ENCODE measurements at regions of chr20 and their contacts with region 1.

Region 1: DNA sequence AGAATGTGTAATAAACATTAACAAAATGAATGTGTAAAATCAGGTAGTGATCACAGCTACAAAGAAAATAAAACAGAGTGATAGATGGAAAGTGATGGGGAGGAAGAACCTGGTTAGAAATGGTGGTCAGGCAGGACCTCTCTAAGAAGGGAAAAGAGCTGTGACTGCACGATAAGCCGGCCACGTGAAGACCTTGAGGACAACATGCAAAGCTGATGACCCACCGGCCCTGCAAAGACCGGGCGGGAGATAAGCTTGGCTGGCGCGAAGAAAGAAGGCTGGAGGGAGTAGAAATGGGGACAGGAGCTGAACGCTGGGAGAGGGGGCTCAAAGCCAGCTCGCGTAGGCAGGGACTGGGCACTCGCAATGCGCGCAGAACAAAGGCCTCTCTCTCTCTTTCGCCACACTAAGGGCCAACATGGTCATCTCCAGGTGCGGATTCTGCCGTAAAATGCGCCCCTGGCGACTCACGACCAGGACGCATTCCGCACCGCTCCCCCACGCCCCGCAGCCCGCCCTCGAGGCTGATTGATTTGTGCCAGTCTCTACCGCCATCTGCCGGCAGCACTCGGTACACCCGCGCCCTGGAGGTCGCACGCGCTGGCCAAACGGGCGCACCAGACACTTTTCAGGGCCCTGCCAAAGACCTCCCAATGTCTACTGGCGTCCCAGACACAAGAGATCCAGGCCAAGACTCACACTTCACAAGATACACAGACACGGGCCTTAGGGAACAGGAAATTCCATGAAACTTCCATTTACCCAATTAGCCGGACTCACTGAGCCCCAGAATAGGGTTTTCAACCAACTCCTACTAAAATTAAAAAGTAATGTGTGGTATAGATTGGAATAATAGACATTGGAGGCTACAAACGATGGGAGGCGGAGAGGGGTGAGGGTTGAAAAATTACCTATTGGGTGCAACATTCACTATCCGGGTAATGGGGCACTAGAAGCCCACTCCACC is 9.4 kb downstream of the DEFB132 start:
- DNase-seq: peak; percentile 82 to 87 (median 83)
- H3K4me3 ChIP-seq: peak overlapping the region in 1 of 2 donors; percentile 60
- H3K4me3 Mint-ChIP-seq: peak overlapping the region; percentile 80 to 87 (median 84)
- H3K27ac ChIP-seq: no peak overlapping the region
- H3K27ac Mint-ChIP-seq: peak overlapping the region in 4 of 7 donors; percentile 52 to 72 (median 64)
- H3K4me1 ChIP-seq: peaks cover 7% of the 10 kb centered on the region
- H3K4me1 Mint-ChIP-seq: peaks cover 7 to 11% (median 9%) of the 10 kb centered on the region in 4 donors
- H3K27me3 ChIP-seq: no peaks in the 10 kb centered on the region
- H3K27me3 Mint-ChIP-seq: peaks cover 3 to 21% of the 10 kb centered on the region in 2 donors

Region 2: GRCh38 chr20:208942-209566 is 57.8 kb before region 1 on chr20:
- CTCF ChIA-PET with region 1: interaction called, 17 read pairs
- POLR2A ChIA-PET with region 1: no interaction called
- intact Hi-C with region 1: loop called (anchors 1 kb)
- DNase-seq: peak in 4 of 5 donors; percentile 34 to 46 (median 38)
- H3K4me3 ChIP-seq: no peak overlapping the region
- H3K4me3 Mint-ChIP-seq: no peak overlapping the region
- H3K27ac ChIP-seq: no peak overlapping the region
- H3K27ac Mint-ChIP-seq: no peak overlapping the region
- H3K4me1 ChIP-seq: no peaks in the 10 kb centered on the region
- H3K4me1 Mint-ChIP-seq: no peaks in the 10 kb centered on the region
- H3K27me3 ChIP-seq: no peaks in the 10 kb centered on the region
- H3K27me3 Mint-ChIP-seq: peaks cover 0 to 4% of the 10 kb centered on the region in 2 donors

Region 3: GRCh38 chr20:219290-220115 is 47.4 kb before region 1 on chr20:
- CTCF ChIA-PET with region 1: interaction called, 10 read pairs
- POLR2A ChIA-PET with region 1: no interaction called
- intact Hi-C with region 1: no loop called
- DNase-seq: no peak
- H3K4me3 ChIP-seq: no peak overlapping the region
- H3K4me3 Mint-ChIP-seq: no peak overlapping the region
- H3K27ac ChIP-seq: no peak overlapping the region
- H3K27ac Mint-ChIP-seq: no peak overlapping the region
- H3K4me1 ChIP-seq: no peaks in the 10 kb centered on the region
- H3K4me1 Mint-ChIP-seq: no peaks in the 10 kb centered on the region
- H3K27me3 ChIP-seq: peaks cover 3% of the 10 kb centered on the region
- H3K27me3 Mint-ChIP-seq: peaks cover 23 to 35% of the 10 kb centered on the region in 2 donors

Region 4: GRCh38 chr20:371755-372542 is 105.1 kb after region 1 on chr20:
- CTCF ChIA-PET with region 1: no interaction called
- POLR2A ChIA-PET with region 1: no interaction called
- intact Hi-C with region 1: no loop called
- DNase-seq: no peak
- H3K4me3 ChIP-seq: no peak overlapping the region
- H3K4me3 Mint-ChIP-seq: peak overlapping the region in 2 of 8 donors; percentile 18 to 56
- H3K27ac ChIP-seq: no peak overlapping the region
- H3K27ac Mint-ChIP-seq: peak overlapping the region in 1 of 7 donors; percentile 86
- H3K4me1 ChIP-seq: peaks cover 13% of the 10 kb centered on the region
- H3K4me1 Mint-ChIP-seq: peaks cover 2 to 12% (median 5%) of the 10 kb centered on the region in 4 donors
- H3K27me3 ChIP-seq: no peaks in the 10 kb centered on the region
- H3K27me3 Mint-ChIP-seq: no peaks in the 10 kb centered on the region

Measured in CD4-positive, alpha-beta memory T cell (primary cell).